Sigmoid colon (tissue), 7 donors: ENCODE measurements at regions of chr16 and their contacts with region 1.

Region 1: GRCh38 chr16:8797364-8798173 is at the starts of genes PMM2 and TMEM186:
- DNase-seq: peak; percentile 98
- H3K4me3 ChIP-seq: peak within 1 kb of the TSS; percentile 81 to 96 (median 88)
- H3K27ac ChIP-seq: peak within 1 kb of the TSS; percentile 80 to 86 (median 81)
- H3K4me1 ChIP-seq: peaks cover 0 to 35% (median 30%) of the 10 kb centered on the region in 4 donors
- H3K27me3 ChIP-seq: no peaks in the 10 kb centered on the region
- CTCF ChIP-seq: no peak
- EP300 ChIP-seq: peak in 1 of 4 donors; percentile 25
- POLR2A ChIP-seq: peak in 1 of 2 donors; percentile 43
- total RNA-seq, gene PMM2: 13.6 to 22.1 (median 18.4) TPM
- total RNA-seq, gene TMEM186: 1.9 to 13.3 (median 8.7) TPM

Region 2: DNA sequence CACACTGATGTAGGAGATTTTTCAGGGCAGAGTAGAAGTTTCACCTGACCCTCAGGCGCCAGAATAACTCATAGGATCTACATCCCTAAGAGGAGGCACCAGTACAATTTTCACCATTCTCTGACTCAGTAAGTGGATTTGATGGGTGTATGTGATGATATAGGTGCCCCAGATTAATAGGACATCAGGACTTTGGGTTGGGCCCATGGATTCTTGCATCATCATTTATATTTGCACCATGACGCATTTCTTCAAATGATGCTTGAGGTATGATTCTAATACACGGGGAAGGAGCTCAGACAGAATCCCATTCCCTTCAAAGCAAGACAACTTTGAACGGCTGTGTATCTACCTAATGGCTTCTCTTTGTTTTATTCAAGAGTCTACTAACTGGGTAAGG is 380.4 kb before region 1 on chr16:
- intact Hi-C with region 1: no loop called
- DNase-seq: no peak
- H3K4me3 ChIP-seq: no peak overlapping the region
- H3K27ac ChIP-seq: no peak overlapping the region
- H3K4me1 ChIP-seq: no peaks in the 10 kb centered on the region
- H3K27me3 ChIP-seq: no peaks in the 10 kb centered on the region
- CTCF ChIP-seq: no peak
- EP300 ChIP-seq: no peak
- POLR2A ChIP-seq: no peak

Region 3: DNA sequence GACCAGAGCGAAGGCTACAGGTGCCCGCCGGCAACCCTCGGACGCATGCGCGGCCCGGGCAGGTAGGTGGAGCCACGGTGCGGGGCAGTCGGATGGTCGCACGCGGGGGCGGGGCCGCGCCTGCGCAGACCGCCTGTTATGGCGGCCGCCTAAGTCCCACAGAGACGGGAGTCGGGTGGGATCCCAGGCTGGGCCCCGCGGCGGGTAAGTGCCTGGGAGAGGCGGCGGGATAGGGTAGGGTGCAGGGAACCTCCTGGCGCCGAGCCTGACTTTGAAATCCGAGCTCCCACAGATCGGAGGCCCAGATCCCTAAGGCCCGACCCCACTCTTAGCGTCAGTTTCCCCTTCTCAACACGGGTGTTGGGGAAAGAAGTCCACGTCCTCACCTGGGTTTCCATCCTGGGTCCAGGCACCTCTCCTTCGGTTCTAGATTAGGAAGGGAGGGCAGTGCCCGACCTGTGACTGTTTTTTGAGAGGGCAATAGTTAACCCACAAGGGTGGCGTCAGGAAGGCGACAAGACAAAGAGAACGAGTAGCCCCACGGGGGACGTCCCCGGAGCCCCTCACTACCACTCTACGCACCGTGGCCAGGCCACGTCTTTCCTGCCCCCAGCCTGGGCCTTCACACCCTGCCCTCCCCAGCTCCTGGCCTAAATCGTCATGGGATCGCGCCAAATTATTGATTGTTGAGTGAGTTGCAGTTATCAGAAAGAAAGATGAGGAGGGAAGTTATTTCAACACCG is 175.8 kb before region 1 on chr16 and contains the start of gene METTL22:
- intact Hi-C with region 1: loop called (anchors 5 kb)
- DNase-seq: peak; percentile 94
- H3K4me3 ChIP-seq: peak within 1 kb of the TSS; percentile 71 to 96 (median 92)
- H3K27ac ChIP-seq: peak within 1 kb of the TSS; percentile 76 to 87 (median 81)
- H3K4me1 ChIP-seq: peaks cover 0 to 20% (median 10%) of the 10 kb centered on the region in 4 donors
- H3K27me3 ChIP-seq: no peaks in the 10 kb centered on the region
- CTCF ChIP-seq: no peak
- EP300 ChIP-seq: no peak
- POLR2A ChIP-seq: peak; percentile 70 to 80
- total RNA-seq, gene METTL22: 25.3 to 55.1 (median 35.1) TPM

Region 4: GRCh38 chr16:8868416-8869211 is 71.0 kb after region 1 on chr16 and contains the start of gene CARHSP1:
- intact Hi-C with region 1: loop called (anchors 5 kb)
- DNase-seq: peak; percentile 93
- H3K4me3 ChIP-seq: peak within 1 kb of the TSS; percentile 52 to 82 (median 66)
- H3K27ac ChIP-seq: peak within 1 kb of the TSS; percentile 74 to 89 (median 84)
- H3K4me1 ChIP-seq: peaks cover 0 to 52% (median 45%) of the 10 kb centered on the region in 4 donors
- H3K27me3 ChIP-seq: peaks cover 0 to 15% (median 0%) of the 10 kb centered on the region in 3 donors
- CTCF ChIP-seq: no peak
- EP300 ChIP-seq: no peak
- POLR2A ChIP-seq: peak; percentile 9 to 49
- total RNA-seq, gene CARHSP1: 32.1 to 79.5 (median 52.8) TPM

Region 5: DNA sequence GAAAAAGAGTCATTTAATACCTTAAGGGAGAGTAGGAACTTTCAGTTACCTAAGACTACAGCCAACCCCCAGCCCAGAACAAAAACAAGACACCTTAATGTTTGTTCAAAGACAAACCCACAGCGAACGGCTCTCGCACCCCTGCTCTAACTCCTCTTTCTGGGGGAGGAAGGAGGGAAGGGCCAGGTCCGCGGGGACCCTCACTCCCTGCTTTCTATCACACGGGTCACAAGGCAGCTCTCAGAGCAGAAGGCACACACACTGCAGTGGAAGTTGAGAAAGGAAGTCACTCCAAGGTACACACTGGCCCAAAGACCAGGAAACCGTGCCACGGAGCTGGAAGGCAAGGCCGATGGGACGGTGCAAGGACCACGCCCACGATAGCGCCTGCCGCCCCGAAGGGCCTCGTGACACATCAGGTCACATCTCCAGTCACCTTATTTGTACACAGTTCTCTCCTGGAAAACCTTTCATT is 94.6 kb after region 1 on chr16:
- intact Hi-C with region 1: no loop called
- DNase-seq: peak; percentile 57
- H3K4me3 ChIP-seq: no peak overlapping the region
- H3K27ac ChIP-seq: no peak overlapping the region
- H3K4me1 ChIP-seq: peaks cover 0 to 11% (median 5%) of the 10 kb centered on the region in 4 donors
- H3K27me3 ChIP-seq: no peaks in the 10 kb centered on the region
- CTCF ChIP-seq: no peak
- EP300 ChIP-seq: no peak
- POLR2A ChIP-seq: no peak

Region 6: GRCh38 chr16:8963825-8964441 is 166.4 kb after region 1 on chr16 and contains the start of gene USP7:
- intact Hi-C with region 1: loop called (anchors 5 kb)
- DNase-seq: peak; percentile 95
- H3K4me3 ChIP-seq: peak within 1 kb of the TSS; percentile 57 to 91 (median 72)
- H3K27ac ChIP-seq: peak within 1 kb of the TSS; percentile 81 to 89 (median 88)
- H3K4me1 ChIP-seq: peaks cover 0 to 44% (median 41%) of the 10 kb centered on the region in 4 donors
- H3K27me3 ChIP-seq: no peaks in the 10 kb centered on the region
- CTCF ChIP-seq: no peak
- EP300 ChIP-seq: no peak
- POLR2A ChIP-seq: no peak
- total RNA-seq, gene USP7: 64.9 to 84.5 (median 80.5) TPM